AG04449 (cell line): ENCODE measurements at regions of chr1 and their contacts with region 1.

Region 1: DNA sequence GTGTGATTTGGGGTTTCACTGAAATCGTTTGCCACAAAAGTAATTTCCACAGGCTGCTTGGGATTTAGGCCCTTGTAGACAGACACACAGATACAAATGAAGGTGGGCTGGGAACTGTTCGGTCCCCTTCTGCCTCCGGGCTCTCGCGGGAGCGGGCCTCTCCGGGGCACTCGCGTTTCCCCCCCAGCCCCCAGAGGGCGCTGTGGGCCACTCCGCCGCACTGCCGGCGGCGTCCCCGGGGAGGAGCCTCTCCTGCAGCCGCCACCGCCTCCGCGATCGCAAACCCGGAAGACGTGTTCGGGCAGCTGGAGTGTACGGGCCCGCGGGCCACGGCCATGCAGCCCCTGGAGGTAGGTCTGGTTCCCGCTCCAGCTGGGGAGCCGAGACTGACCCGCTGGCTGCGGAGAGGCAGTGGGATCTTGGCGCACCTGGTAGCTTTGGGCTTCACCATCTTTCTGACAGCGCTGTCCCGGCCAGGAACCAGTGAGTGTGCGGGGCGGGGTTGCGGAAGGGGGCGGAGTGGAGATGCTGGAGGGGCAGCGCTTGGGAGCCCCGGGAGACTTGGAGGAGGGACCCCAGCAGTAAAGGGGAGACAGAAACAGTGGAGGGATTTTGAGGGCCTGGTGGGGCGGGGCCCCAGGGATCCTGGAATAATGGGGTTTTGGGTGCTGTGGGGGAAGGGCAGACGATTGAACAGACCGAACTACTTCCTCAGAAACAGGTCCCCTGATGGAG is at the start of gene CYB561D1:
- DNase-seq: no peak
- H3K4me3 ChIP-seq: peak within 1 kb of the TSS; percentile 100
- CTCF ChIP-seq: peak; percentile 98

Region 2: GRCh38 chr1:109137964-109138741 is 355.8 kb before region 1 on chr1:
- CTCF ChIA-PET with region 1: no interaction called
- POLR2A ChIA-PET with region 1: no interaction called
- DNase-seq: no peak
- H3K4me3 ChIP-seq: no peak overlapping the region
- CTCF ChIP-seq: no peak

Region 3: DNA sequence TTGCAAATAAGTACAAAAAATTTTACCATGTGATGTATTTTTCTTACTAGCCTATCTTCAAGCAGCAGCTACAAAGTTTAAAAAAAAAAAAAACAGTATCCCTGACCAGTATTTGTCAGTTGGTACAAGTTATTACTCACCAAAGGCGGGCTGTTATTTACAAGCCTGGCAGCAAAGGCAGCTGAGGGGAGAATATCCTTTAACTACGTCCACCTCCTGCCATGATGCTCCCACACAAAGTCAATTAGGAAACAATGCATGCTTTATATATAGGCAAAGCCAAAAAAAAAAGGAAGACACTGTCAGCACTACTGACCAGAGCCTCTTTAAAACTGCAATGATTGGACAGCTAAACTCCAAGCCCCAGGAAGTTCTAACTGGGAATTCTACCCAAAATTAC is 81.4 kb before region 1 on chr1:
- CTCF ChIA-PET with region 1: interaction called, 10 read pairs
- POLR2A ChIA-PET with region 1: no interaction called
- DNase-seq: no peak
- H3K4me3 ChIP-seq: no peak overlapping the region
- CTCF ChIP-seq: no peak

Region 4: GRCh38 chr1:109426278-109427170 is 67.4 kb before region 1 on chr1 and contains the start of gene PSMA5:
- CTCF ChIA-PET with region 1: interaction called, 86 read pairs
- POLR2A ChIA-PET with region 1: no interaction called
- DNase-seq: peak; percentile 97
- H3K4me3 ChIP-seq: peak within 1 kb of the TSS; percentile 92
- CTCF ChIP-seq: no peak

Region 5: DNA sequence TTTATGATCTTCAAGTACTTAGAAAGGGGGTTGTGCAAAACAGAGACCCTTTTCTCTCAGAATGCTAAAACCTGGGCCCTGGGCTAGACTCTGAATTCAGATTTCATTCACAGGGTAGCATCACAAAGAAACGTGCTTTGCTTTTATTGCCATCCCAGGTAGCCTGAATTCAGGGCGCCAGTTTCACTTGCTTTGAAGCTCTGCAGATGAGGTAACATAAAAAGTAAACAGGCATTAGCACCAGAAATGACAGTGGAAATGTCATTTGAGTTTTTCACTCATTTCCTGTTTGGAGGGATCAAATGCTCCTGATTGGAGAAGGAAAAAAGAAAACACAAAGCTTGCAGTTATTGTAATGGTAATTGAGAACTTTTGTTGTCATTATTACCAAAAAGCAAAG is 25.1 kb before region 1 on chr1:
- CTCF ChIA-PET with region 1: interaction called, 20 read pairs
- POLR2A ChIA-PET with region 1: no interaction called
- DNase-seq: no peak
- H3K4me3 ChIP-seq: no peak overlapping the region
- CTCF ChIP-seq: no peak

Region 6: DNA sequence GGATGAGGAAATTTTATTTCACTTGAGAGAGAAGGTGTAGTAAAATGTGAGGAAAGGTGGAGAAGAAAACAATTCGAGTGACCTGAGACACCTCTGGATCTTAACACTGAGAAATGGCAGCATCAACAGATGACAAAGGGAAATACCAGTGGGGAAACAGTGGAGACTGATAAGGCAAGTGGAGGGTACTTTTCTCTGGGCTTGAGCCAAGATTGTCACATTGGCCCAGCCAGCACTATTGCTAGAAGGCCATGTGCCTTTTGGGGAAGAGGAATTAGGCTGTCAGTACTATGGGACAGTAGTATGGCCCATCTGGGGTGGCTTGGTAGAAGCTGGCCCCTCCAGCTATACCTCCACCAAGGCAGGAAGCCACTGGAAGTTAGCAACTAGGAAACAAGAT is 19.3 kb before region 1 on chr1:
- CTCF ChIA-PET with region 1: interaction called, 107 read pairs
- POLR2A ChIA-PET with region 1: no interaction called
- DNase-seq: no peak
- H3K4me3 ChIP-seq: no peak overlapping the region
- CTCF ChIP-seq: no peak

Region 7: GRCh38 chr1:109483672-109484518 is 10.1 kb before region 1 on chr1 and contains the start of gene ATXN7L2:
- CTCF ChIA-PET with region 1: interaction called, 657 read pairs
- POLR2A ChIA-PET with region 1: interaction called, 5 read pairs
- DNase-seq: no peak
- H3K4me3 ChIP-seq: peak within 1 kb of the TSS; percentile 82
- CTCF ChIP-seq: no peak

Region 8: GRCh38 chr1:109509176-109510134 is 15.5 kb after region 1 on chr1 and contains the start of gene AMIGO1:
- CTCF ChIA-PET with region 1: interaction called, 657 read pairs
- POLR2A ChIA-PET with region 1: no interaction called
- DNase-seq: no peak
- H3K4me3 ChIP-seq: peak within 1 kb of the TSS; percentile 67
- CTCF ChIP-seq: no peak

Region 9: DNA sequence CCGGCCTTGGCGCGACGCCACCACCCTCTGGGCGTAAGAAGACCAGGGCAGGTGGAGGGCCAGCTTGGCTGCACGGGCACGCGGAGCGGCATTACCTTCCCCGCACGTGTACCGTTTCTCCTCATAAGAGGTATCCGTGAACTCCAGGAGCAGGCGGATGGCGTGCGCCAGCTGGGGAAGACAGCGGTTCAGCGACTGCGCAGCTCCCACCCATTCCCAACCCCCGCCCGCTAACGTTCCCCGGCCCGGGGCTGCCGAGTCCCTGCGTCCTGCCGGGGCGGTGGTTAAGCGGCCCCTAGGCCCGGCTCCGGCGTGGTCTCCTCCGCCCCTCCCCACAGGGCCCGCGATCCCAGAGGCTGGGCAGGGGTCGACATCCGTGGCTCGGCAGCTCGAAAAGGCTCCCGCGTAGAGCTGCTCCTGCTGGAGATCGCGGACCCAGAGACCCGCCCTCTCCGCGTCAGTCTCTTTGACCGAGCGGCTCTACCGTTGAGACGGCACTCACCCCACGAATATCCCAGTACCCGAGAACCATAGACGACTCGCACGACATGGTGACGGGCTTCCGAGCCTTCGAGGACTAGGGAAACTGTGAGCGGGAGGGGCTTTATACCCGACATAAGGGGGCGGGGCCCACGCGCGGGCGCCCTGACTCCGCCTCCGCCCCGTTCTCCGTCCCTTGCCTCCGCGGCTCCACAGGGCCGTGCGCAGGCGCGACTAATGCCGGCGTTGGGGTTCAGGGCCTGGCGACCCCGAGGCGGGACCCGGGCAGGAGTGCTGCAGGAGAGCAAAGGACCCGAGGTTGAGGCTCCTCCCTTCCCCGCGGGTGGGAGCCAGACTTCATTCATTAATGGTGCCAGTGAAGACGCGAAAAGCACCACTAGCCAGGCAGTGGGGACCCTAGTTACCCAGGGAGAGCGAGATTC is 246.0 kb after region 1 on chr1:
- CTCF ChIA-PET with region 1: no interaction called
- POLR2A ChIA-PET with region 1: no interaction called
- DNase-seq: no peak
- H3K4me3 ChIP-seq: peak overlapping the region; percentile 76
- CTCF ChIP-seq: no peak